Activated T-helper 2 cell treated with anti-CD3 and anti-CD28 coated beads, Interferon-gamma antibody, Interleukin-2, Interleukin-4, amounts not matched to agents 10 μg/mL and 5 μg/mL and 100 μg/mL, durations not matched to agents 14 hours and 24 hours and 36 hours (primary cell): ENCODE measurements at regions of chr1 and their contacts with region 1.

Region 1: DNA sequence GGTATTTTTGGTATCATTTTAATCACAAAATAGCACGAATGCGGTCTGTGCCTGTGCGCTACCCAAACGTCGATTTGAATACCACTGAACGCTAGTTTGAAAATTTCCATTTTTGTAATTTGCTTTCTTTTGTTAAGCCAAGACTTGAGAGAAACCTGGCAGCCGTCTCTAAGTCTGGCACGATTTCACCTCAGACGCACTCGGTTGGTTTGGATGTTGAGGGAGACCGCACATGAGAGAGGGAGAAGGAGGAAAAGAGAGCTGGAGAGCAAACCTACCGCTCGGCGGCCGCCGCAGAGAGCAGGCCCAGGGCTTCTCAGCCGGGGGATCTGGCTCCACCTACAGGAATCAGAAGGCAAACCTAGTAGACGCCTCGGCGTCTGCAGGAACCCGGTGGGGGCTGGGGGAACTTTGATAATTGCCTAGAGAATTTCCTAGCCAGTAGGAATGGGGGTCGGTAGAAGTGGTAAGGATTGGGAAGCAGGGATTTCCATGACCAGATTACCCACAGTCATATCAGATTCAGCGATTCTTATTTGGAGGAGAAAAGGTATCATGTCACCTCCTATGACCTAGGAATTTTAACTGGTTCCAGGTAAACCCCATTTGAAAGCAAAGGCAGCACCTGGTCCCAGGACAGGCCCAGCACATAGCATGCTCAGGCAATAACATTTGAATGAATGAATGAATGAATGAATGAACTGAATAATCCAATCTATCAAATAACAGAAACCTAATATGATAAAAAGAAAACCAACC is 83.2 kb downstream of the TM2D1 start:
- DNase-seq: peak; percentile 29
- H3K4me3 Mint-ChIP-seq: peak overlapping the region; percentile 63
- H3K27ac Mint-ChIP-seq: no peak overlapping the region
- H3K4me1 Mint-ChIP-seq: peaks cover 8% of the 10 kb centered on the region
- H3K27me3 Mint-ChIP-seq: peaks cover 1% of the 10 kb centered on the region

Region 2: GRCh38 chr1:61301824-61302657 is 339.7 kb before region 1 on chr1:
- intact Hi-C with region 1: no loop called
- DNase-seq: no peak
- H3K4me3 Mint-ChIP-seq: no peak overlapping the region
- H3K27ac Mint-ChIP-seq: peak overlapping the region; percentile 54
- H3K4me1 Mint-ChIP-seq: peaks cover 17% of the 10 kb centered on the region
- H3K27me3 Mint-ChIP-seq: peaks cover 17% of the 10 kb centered on the region

Region 3: DNA sequence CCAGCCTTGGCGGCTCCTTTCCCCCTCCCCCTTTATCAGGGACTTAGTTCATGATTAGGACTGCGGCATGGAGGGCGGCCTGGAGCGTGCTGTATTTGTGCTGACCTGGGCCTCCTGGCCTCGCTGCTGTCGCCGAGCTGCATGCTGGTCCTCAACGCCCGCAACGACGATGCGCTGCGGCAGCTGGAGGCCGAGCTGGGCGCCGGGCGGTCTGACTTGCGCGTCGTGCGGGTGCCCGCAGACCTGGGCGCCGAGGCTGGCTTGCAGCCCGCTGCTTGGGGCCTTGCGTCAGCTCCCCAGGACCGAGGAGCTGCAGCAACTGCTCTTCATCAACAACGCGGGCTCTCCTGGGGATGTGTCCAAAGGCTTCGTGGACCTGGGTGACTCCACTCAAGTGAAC is 12.3 kb after region 1 on chr1:
- intact Hi-C with region 1: loop called (anchors 1 kb)
- DNase-seq: no peak
- H3K4me3 Mint-ChIP-seq: no peak overlapping the region
- H3K27ac Mint-ChIP-seq: no peak overlapping the region
- H3K4me1 Mint-ChIP-seq: no peaks in the 10 kb centered on the region
- H3K27me3 Mint-ChIP-seq: peaks cover 4% of the 10 kb centered on the region

Region 4: GRCh38 chr1:61770131-61770530 is 128.4 kb after region 1 on chr1:
- intact Hi-C with region 1: no loop called
- DNase-seq: no peak
- H3K4me3 Mint-ChIP-seq: no peak overlapping the region
- H3K27ac Mint-ChIP-seq: no peak overlapping the region
- H3K4me1 Mint-ChIP-seq: no peaks in the 10 kb centered on the region
- H3K27me3 Mint-ChIP-seq: no peaks in the 10 kb centered on the region

Region 5: DNA sequence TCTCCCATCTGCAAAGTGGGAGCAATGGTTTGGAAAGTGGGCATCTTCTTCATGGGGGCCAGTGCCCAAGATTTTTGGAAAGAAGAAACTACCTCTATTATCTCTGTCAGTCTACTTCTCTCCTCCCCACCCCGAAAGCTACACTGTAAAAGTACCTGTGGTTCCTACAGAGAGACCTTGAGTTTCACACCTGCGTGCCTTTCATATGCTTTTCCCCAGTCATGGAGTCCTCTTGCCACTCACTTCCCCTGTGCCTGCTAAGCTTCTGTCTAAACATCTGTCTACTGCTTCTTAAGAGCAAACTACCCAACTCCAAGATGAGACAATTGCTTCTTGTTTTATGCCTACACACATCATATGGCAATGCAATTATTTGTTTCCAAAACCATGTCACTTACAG is 362.0 kb after region 1 on chr1:
- intact Hi-C with region 1: no loop called
- DNase-seq: no peak
- H3K4me3 Mint-ChIP-seq: no peak overlapping the region
- H3K27ac Mint-ChIP-seq: no peak overlapping the region
- H3K4me1 Mint-ChIP-seq: no peaks in the 10 kb centered on the region
- H3K27me3 Mint-ChIP-seq: no peaks in the 10 kb centered on the region

Region 6: GRCh38 chr1:63033211-63033610 is 1391.5 kb after region 1 on chr1:
- intact Hi-C with region 1: no loop called
- DNase-seq: no peak
- H3K4me3 Mint-ChIP-seq: no peak overlapping the region
- H3K27ac Mint-ChIP-seq: no peak overlapping the region
- H3K4me1 Mint-ChIP-seq: no peaks in the 10 kb centered on the region
- H3K27me3 Mint-ChIP-seq: no peaks in the 10 kb centered on the region